ENCODE measurements at regions of chr2 and their contacts with region 1.

Region 1: DNA sequence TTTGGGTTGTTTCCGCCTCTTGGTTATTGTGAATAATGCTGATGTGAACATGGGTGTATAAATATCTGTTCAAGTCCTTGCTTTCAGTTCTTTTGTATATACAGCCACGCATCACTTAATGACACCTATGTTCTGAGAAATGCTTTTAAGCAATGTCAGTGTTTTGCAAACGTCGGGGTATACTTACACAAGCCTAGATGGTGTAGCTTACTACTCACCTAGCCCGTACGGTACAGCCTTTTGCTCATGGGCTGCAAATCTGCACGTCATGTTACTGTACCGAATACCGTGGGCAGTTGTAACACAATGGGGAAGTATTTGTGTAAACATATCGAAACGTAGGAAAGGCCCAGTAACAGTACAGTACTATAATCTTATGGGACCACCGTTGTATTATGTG is 12.4 kb downstream of the RALB start:
- DNase-seq: no peak
- CTCF ChIP-seq: no peak

Region 2: GRCh38 chr2:120231974-120232635 is 32.9 kb before region 1 on chr2:
- CTCF ChIA-PET with region 1: no interaction called
- POLR2A ChIA-PET with region 1: no interaction called
- DNase-seq: peak; percentile 83
- CTCF ChIP-seq: no peak

Region 3: GRCh38 chr2:120287183-120288015 is 22.4 kb after region 1 on chr2:
- CTCF ChIA-PET with region 1: interaction called, 11 read pairs
- POLR2A ChIA-PET with region 1: interaction called, 5 read pairs
- DNase-seq: peak; percentile 75
- CTCF ChIP-seq: no peak

Region 4: DNA sequence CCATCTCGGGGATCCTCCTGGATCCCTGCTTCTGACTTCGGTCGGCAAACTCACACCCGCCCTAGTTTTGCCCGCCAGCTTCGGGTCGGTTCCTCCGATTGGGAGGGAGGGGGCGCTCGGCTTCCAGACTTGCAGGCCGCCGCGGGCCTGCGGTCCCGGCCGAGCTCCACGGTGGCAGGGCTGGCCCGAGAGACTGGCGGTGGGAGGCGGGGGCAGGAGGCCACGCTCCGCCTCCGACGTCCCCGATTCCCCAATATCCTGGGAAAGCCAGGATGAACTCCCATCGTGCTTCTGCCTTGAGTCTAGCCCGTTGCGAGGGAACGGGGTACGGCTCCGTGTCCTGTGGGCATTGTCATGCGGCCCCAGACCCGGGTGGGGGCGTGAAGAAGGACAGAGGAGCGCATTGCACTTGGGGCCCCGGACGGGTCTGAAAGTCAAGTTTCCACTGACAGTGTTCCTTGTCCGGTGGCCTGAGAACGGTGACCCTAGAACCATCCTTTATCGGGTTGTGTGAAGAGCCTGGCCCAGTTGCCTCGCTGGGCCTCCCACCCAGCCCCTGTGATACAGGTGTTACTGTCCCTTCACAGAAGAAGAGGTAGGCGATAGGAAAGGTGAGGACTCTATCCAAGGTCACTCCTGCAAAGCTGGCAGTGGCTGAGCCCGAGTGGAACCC is 78.6 kb after region 1 on chr2:
- CTCF ChIA-PET with region 1: no interaction called
- POLR2A ChIA-PET with region 1: no interaction called
- DNase-seq: peak; percentile 77
- CTCF ChIP-seq: peak; percentile 64